Heart right ventricle (tissue), 16 donors: ENCODE measurements at regions of chr10 and their contacts with region 1.

Region 1: DNA sequence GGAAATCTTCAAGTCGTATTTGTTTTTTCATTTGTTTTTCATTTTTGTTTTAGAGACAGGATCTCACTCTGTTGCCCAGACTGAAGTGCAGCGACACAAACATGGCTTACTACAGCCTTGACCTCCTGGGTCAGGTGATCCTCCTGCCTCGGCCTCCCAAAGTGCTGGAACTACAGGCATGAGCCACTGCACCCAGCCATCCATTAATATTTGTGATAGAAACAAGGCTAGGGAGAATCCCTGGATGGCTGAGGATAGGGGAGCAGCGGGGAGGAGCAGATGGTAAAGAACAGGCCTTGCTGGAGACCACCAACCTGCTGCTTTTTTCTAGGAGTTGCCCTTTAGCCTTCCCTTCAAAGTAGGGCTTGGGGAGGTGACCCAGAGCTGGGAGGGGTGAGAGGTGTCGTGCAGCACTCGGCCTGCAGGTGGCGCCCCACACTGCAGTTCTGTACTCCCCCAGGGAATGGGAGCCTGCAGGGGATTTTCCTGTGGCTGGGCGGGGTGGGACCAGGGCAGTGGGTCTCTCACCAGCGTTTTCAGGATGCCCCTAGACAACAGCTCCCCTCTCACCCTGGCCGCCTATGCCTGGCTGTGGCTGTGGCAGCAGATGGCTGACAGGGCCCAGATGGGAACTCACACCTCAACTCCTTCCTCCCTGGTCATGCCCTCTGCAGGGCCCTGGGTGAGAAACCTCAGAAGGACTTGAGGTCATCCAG is 12.6 kb upstream of the CDH23 start:
- DNase-seq: peak; percentile 69 to 79
- ATAC-seq: peak; percentile 56 to 95 (median 91)
- H3K4me3 ChIP-seq: no peak overlapping the region
- H3K27ac ChIP-seq: no peak overlapping the region
- H3K4me1 ChIP-seq: peaks cover 0 to 4% (median 0%) of the 10 kb centered on the region in 9 donors
- H3K27me3 ChIP-seq: no peaks in the 10 kb centered on the region
- CTCF ChIP-seq: peak; percentile 71 to 95 (median 90)

Region 2: GRCh38 chr10:71314028-71314693 is 70.0 kb before region 1 on chr10:
- intact Hi-C with region 1: loop called in 1 of 10 experiments (anchors 5 kb)
- DNase-seq: peak; percentile 48 to 51
- ATAC-seq: peak in 7 of 8 donors; percentile 48 to 77 (median 63)
- H3K4me3 ChIP-seq: peak overlapping the region in 3 of 10 donors; percentile 12 to 24 (median 17)
- H3K27ac ChIP-seq: peak overlapping the region in 1 of 10 donors; percentile 36
- H3K4me1 ChIP-seq: peaks cover 3 to 35% (median 25%) of the 10 kb centered on the region in 9 donors
- H3K27me3 ChIP-seq: no peaks in the 10 kb centered on the region
- CTCF ChIP-seq: peak; percentile 75 to 92 (median 89)

Region 3: DNA sequence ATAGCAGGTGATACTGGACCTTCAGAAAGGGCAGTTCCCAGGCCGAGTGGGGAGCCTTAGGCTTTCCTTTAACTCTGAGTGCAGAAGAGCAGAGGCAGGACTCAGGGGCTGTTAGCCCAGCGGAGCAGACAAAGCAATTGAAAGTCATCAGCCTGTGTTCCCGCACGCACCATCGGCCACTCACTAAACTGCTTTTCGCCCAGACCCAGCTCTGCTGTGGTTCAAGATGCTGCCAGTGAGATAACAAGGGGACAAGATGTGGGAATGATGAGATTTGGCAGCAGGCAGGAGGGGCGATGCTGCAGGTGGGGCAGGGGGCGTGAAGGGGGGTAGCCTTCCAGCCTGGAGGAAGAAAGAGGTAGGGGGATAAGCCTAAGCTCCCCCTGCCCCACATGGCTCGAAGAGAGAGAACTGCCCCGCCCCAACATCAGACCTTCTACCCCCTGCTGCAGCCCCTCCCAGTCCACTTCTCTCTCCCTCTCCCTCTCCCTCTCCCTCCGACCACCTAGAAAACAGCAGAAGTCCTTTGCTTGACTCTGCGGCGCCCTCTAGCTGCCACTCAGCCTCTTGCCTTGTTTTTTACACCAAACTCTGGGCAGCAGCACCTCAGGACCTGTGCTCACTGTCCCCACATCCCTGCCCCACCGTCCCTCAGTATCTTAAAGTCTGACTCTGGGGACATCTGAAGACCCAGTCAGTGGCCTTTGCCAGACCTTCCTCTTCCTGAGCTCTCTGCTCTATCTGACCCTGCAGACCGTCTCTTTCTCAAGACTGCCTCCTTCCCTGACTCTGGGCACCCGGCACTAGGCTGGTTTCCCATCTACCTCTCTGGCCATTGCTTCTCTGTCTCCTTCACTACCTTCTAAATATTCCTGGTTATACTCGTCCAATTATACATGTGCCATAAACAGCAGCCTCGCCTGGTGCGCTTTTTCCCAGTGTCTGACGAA is 225.0 kb after region 1 on chr10:
- intact Hi-C with region 1: loop called in 2 of 10 experiments (anchors 5 kb)
- DNase-seq: peak; percentile 82
- ATAC-seq: peak in 6 of 8 donors; percentile 19 to 61 (median 51)
- H3K4me3 ChIP-seq: no peak overlapping the region
- H3K27ac ChIP-seq: no peak overlapping the region
- H3K4me1 ChIP-seq: peaks cover 8 to 26% (median 16%) of the 10 kb centered on the region in 9 donors
- H3K27me3 ChIP-seq: no peaks in the 10 kb centered on the region
- CTCF ChIP-seq: peak; percentile 69 to 83 (median 82)

Region 4: GRCh38 chr10:71708301-71708703 is 324.2 kb after region 1 on chr10:
- intact Hi-C with region 1: loop called in 8 of 10 experiments (anchors 5 to 10 kb)
- DNase-seq: peak; percentile 50 to 71
- ATAC-seq: peak; percentile 32 to 57 (median 42)
- H3K4me3 ChIP-seq: no peak overlapping the region
- H3K27ac ChIP-seq: no peak overlapping the region
- H3K4me1 ChIP-seq: peaks cover 3 to 33% (median 28%) of the 10 kb centered on the region in 9 donors
- H3K27me3 ChIP-seq: no peaks in the 10 kb centered on the region
- CTCF ChIP-seq: peak; percentile 64 to 96 (median 90)

Region 5: DNA sequence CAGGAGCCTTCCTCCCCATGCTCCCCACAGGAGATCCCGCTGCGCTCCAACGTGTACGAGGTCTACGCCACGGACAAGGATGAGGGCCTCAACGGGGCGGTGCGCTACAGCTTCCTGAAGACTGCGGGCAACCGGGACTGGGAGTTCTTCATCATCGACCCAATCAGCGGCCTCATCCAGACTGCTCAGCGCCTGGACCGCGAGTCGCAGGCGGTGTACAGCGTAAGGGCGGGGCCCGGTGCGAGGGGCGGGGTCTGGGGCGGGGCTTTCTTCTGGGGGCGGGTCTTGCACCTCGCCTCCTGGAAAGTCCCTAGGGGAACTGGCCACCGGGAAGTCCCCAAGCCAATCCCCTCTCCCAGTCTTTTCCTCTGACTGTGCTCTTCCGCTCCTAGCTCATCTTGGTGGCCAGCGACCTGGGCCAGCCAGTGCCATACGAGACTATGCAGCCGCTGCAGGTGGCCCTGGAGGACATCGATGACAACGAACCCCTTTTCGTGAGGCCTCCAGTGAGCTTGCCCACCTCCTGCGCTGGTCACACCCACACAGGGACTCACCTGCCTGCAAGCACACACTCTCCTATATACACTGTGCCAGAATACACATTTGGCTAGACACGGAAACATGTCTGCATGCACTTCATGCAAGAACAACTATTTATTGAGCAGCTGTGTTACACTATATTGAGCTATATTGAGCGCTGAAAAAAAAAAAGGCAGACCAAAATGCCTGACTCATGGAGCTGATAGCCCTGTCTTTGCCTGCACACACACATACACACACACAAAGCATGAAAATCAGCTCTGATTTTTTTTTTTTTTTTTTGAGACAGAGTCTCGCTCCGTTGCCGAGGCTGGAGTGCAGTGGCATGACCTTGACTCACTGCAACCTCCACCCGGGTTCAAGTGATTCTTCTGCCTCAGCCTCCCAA is 421.9 kb after region 1 on chr10:
- intact Hi-C with region 1: loop called in 4 of 10 experiments (anchors 5 to 10 kb)
- DNase-seq: peak in 1 of 2 donors; percentile 48
- ATAC-seq: peak in 7 of 8 donors; percentile 29 to 66 (median 55)
- H3K4me3 ChIP-seq: no peak overlapping the region
- H3K27ac ChIP-seq: no peak overlapping the region
- H3K4me1 ChIP-seq: peaks cover 0 to 21% (median 0%) of the 10 kb centered on the region in 9 donors
- H3K27me3 ChIP-seq: peaks cover 0 to 15% (median 0%) of the 10 kb centered on the region in 7 donors
- CTCF ChIP-seq: no peak

Region 6: GRCh38 chr10:71812016-71812912 is 428.1 kb after region 1 on chr10:
- intact Hi-C with region 1: loop called in 4 of 10 experiments (anchors 5 to 10 kb)
- DNase-seq: peak; percentile 54 to 81
- ATAC-seq: peak; percentile 77 to 87 (median 84)
- H3K4me3 ChIP-seq: no peak overlapping the region
- H3K27ac ChIP-seq: no peak overlapping the region
- H3K4me1 ChIP-seq: peaks cover 5 to 34% (median 14%) of the 10 kb centered on the region in 9 donors
- H3K27me3 ChIP-seq: peaks cover 0 to 14% (median 0%) of the 10 kb centered on the region in 7 donors
- CTCF ChIP-seq: peak; percentile 63 to 93 (median 82)

Region 7: GRCh38 chr10:71893920-71894319 is 509.8 kb after region 1 on chr10:
- intact Hi-C with region 1: loop called in 1 of 10 experiments (anchors 10 kb)
- DNase-seq: no peak
- ATAC-seq: no peak
- H3K4me3 ChIP-seq: no peak overlapping the region
- H3K27ac ChIP-seq: no peak overlapping the region
- H3K4me1 ChIP-seq: peaks cover 0 to 49% (median 8%) of the 10 kb centered on the region in 9 donors
- H3K27me3 ChIP-seq: no peaks in the 10 kb centered on the region
- CTCF ChIP-seq: no peak